ENCODE measurements at regions of chr2 and their contacts with region 1.

Region 1: DNA sequence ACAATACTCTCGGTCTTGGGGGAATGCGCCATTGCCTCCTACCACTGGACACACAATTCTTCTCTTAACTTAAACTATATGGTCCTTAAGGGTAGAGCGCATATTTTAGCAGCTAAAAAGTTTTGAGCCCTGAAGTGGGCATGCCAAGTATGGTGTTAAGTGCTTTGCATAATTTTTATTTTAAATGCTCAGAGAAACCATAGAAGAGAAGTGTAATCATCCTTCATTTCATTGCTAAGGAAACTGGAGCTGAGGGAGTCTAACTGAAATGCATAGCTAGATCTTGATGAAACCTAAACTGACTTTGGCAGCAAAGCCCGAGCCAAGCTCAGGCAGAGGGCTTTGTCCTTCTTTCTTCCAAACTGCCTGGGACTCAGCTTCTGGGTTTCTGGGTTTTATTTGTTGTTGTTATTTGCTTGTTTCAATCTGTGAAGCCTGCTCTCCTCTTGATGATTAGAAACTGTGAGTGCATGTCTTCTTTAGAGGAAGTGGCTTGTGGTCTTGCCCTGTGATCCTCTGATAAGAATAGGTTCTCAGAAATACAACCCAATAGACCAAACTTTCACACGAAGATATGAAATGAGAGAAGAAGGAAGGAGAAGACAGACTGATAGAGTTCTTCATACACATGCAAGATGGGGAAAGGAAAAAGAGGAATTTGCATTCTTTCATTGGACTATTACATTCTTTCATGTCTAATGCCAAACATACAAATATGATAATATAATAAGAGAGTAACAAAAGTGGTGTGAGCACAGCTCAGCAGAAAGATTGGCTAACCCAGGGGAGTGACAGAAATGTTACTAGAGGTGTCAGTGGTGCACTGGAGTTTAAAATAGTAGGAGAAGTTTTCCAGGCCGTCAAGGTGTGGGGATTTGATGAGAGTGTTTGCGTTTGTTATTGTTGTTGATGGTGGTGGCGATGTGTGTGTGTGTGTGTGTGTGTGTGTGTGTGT is 7.5 kb upstream of the RNF144A start:
- DNase-seq: peak in 3 of 4 experiments; percentile 30 to 82 (median 66)
- ATAC-seq: peak; percentile 94
- H3K4me3 ChIP-seq: no peak overlapping the region
- H3K27ac ChIP-seq: 0 out of 3 replicates have a peak overlapping the region, but pooled peaks have one; percentile 29
- H3K4me1 ChIP-seq: peaks cover 8 to 21% of the 10 kb centered on the region in 2 experiments; a peak in 4 of 5 replicates
- H3K27me3 ChIP-seq: 0 out of 5 replicates have a peak, but pooled peaks cover 0 to 4% of the 10 kb centered on the region in 2 experiments
- CTCF ChIP-seq: no peak
- EP300 ChIP-seq: peak; percentile 96
- POLR2A ChIP-seq: no peak
- RAD21 ChIP-seq: peak in 1 of 2 experiments; percentile 22; a peak in 1 of 4 replicates

Region 2: DNA sequence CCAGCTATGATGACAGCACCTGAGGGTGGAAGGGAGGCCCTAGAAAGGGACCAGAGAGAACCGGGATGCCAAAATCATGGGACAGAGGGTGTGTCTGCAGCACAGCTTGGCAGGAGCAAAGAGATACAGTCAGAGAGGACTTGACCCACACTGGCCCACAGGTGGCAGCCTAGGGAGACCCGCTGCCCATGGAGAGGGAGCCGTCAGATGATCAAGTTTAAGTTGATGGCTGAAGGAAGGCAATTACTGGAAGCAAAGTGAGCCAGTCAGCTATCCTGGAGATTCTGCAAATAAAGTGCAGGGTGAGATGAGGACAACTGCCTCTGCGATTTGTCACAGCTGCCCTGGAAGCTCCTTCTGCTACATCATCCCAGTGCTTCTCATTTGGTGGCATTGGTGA is 118.0 kb before region 1 on chr2:
- CTCF ChIA-PET with region 1: no interaction called
- POLR2A ChIA-PET with region 1: no interaction called
- in situ Hi-C with region 1: no loop called
- intact Hi-C with region 1: no loop called
- DNase-seq: peak in 2 of 4 experiments; percentile 26 to 30
- ATAC-seq: peak; percentile 84
- H3K4me3 ChIP-seq: no peak overlapping the region
- H3K27ac ChIP-seq: no peak overlapping the region
- H3K4me1 ChIP-seq: no peaks in the 10 kb centered on the region
- H3K27me3 ChIP-seq: peaks cover 10 to 13% of the 10 kb centered on the region in 2 experiments; a peak in 4 of 5 replicates
- CTCF ChIP-seq: peak; percentile 40 to 53 (median 43); a peak in 5 of 6 replicates
- EP300 ChIP-seq: no peak
- POLR2A ChIP-seq: no peak
- RAD21 ChIP-seq: peak in 1 of 2 experiments; percentile 27; a peak in 2 of 4 replicates

Region 3: GRCh38 chr2:6865346-6866274 is 44.1 kb before region 1 on chr2 and contains the start of gene CMPK2:
- CTCF ChIA-PET with region 1: no interaction called
- POLR2A ChIA-PET with region 1: no interaction called
- in situ Hi-C with region 1: no loop called
- intact Hi-C with region 1: loop called (anchors 2 kb)
- DNase-seq: peak; percentile 75 to 84 (median 82)
- ATAC-seq: peak; percentile 88
- H3K4me3 ChIP-seq: peak within 1 kb of the TSS; percentile 58
- H3K27ac ChIP-seq: peak within 1 kb of the TSS; percentile 86
- H3K4me1 ChIP-seq: peaks cover 14 to 19% of the 10 kb centered on the region in 2 experiments
- H3K27me3 ChIP-seq: no peaks in the 10 kb centered on the region
- CTCF ChIP-seq: peak; percentile 31 to 46 (median 36); a peak in 3 of 6 replicates
- EP300 ChIP-seq: peak; percentile 40; the same call in 1 of the 2 replicates
- POLR2A ChIP-seq: peak; percentile 57; the same call in 1 of the 2 replicates
- RAD21 ChIP-seq: peak in 1 of 2 experiments; percentile 33; a peak in 2 of 4 replicates
- polyA plus RNA-seq, gene CMPK2: 2.6 to 2.9 TPM

Region 4: GRCh38 chr2:6929196-6929819 is 19.6 kb after region 1 on chr2:
- CTCF ChIA-PET with region 1: no interaction called
- POLR2A ChIA-PET with region 1: no interaction called
- in situ Hi-C with region 1: no loop called
- intact Hi-C with region 1: no loop called
- DNase-seq: no peak
- ATAC-seq: no peak
- H3K4me3 ChIP-seq: no peak overlapping the region
- H3K27ac ChIP-seq: no peak overlapping the region
- H3K4me1 ChIP-seq: peaks cover 0 to 4% of the 10 kb centered on the region in 2 experiments; a peak in 2 of 5 replicates
- H3K27me3 ChIP-seq: no peaks in the 10 kb centered on the region
- CTCF ChIP-seq: no peak
- EP300 ChIP-seq: no peak
- POLR2A ChIP-seq: no peak
- RAD21 ChIP-seq: no peak

Region 5: DNA sequence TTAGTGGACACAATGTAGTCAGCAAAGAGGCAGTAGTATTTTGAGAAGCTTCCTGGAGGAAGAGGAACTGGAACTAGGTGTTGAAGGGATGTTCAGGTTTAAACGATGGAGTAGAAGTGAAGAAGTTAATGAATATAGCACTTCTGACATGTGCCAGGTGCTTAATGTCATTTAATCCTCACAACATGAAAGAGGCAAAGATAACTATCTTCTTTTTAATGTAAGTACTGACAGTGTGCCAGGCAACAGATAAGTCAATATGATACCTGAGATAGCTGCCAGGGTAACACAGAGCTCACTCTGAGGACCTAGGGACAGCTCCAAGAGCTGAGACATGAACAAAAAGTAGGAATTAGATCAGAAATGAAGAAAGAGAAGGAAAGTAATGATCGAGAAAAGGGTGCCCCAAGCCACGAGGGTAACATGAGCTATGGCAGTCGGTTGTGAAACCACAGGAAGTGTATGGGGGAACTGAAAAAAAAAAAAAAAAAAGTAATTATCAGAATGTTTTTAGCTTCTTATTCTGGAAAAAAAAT is 148.2 kb after region 1 on chr2:
- CTCF ChIA-PET with region 1: no interaction called
- POLR2A ChIA-PET with region 1: no interaction called
- in situ Hi-C with region 1: no loop called
- intact Hi-C with region 1: no loop called
- DNase-seq: no peak
- ATAC-seq: no peak
- H3K4me3 ChIP-seq: no peak overlapping the region
- H3K27ac ChIP-seq: no peak overlapping the region
- H3K4me1 ChIP-seq: no peaks in the 10 kb centered on the region
- H3K27me3 ChIP-seq: peaks cover 3 to 18% of the 10 kb centered on the region in 2 experiments; a peak in 3 of 5 replicates
- CTCF ChIP-seq: no peak
- EP300 ChIP-seq: no peak
- POLR2A ChIP-seq: no peak
- RAD21 ChIP-seq: no peak

Measured in K562 (cell line).